ENCODE measurements at regions of chr19 and their contacts with region 1.

Region 1: GRCh38 chr19:12484371-12485051 is at the start of gene ZNF709:
- DNase-seq: peak; percentile 91 to 95 (median 93)
- ATAC-seq: peak; percentile 98 to 100 (median 100)
- H3K4me3 ChIP-seq: peak within 1 kb of the TSS; percentile 80 to 99 (median 94)
- H3K27ac ChIP-seq: peak within 1 kb of the TSS; percentile 39 to 87 (median 76)
- H3K4me1 ChIP-seq: peaks cover 0 to 27% (median 13%) of the 10 kb centered on the region in 12 donors
- H3K27me3 ChIP-seq: no peaks in the 10 kb centered on the region
- CTCF ChIP-seq: no peak
- POLR2A ChIP-seq: peak in 1 of 2 donors; percentile 51
- total RNA-seq, gene ZNF709: 0.89 to 2.9 (median 1.7) TPM

Region 2: GRCh38 chr19:12112701-12113100 is 371.8 kb before region 1 on chr19:
- intact Hi-C with region 1: no loop called
- DNase-seq: no peak
- ATAC-seq: no peak
- H3K4me3 ChIP-seq: no peak overlapping the region
- H3K27ac ChIP-seq: no peak overlapping the region
- H3K4me1 ChIP-seq: no peaks in the 10 kb centered on the region
- H3K27me3 ChIP-seq: no peaks in the 10 kb centered on the region
- CTCF ChIP-seq: no peak
- POLR2A ChIP-seq: no peak

Region 3: GRCh38 chr19:12440541-12441316 is 43.8 kb before region 1 on chr19 and contains the start of gene ZNF443:
- intact Hi-C with region 1: loop called in 3 of 10 experiments (anchors 1 to 5 kb)
- DNase-seq: peak; percentile 98 to 99 (median 99)
- ATAC-seq: peak; percentile 100
- H3K4me3 ChIP-seq: peak within 1 kb of the TSS; percentile 58 to 87 (median 76)
- H3K27ac ChIP-seq: peak within 1 kb of the TSS; percentile 40 to 87 (median 76)
- H3K4me1 ChIP-seq: peaks cover 0 to 12% (median 0%) of the 10 kb centered on the region in 12 donors
- H3K27me3 ChIP-seq: no peaks in the 10 kb centered on the region
- CTCF ChIP-seq: peak in 2 of 12 donors; percentile 12 to 21
- POLR2A ChIP-seq: peak in 1 of 2 donors; percentile 59
- total RNA-seq, gene ZNF443: 1.5 to 3.6 (median 2.1) TPM

Region 4: DNA sequence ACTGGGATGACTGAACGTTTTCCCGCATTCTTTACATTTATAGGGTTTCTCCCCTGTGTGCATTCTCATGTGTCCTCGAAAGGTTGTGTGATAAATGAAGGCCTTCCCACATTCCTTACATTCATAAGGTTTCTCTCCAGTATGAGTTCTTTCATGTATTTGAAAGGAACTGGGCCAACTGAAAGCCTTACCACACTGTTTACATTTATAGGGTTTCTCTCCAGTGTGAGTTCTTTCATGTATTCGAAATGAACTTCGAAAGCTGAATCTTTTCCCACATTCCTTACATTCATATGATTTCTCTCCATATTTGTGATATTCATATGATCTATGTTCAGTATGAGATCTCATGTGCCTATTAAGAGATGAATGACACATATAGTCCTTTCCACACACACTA is 19.3 kb before region 1 on chr19:
- intact Hi-C with region 1: no loop called
- DNase-seq: no peak
- ATAC-seq: no peak
- H3K4me3 ChIP-seq: no peak overlapping the region
- H3K27ac ChIP-seq: no peak overlapping the region
- H3K4me1 ChIP-seq: no peaks in the 10 kb centered on the region
- H3K27me3 ChIP-seq: no peaks in the 10 kb centered on the region
- CTCF ChIP-seq: no peak
- POLR2A ChIP-seq: no peak